ENCODE measurements at regions of chr20 and their contacts with region 1.

Region 1: DNA sequence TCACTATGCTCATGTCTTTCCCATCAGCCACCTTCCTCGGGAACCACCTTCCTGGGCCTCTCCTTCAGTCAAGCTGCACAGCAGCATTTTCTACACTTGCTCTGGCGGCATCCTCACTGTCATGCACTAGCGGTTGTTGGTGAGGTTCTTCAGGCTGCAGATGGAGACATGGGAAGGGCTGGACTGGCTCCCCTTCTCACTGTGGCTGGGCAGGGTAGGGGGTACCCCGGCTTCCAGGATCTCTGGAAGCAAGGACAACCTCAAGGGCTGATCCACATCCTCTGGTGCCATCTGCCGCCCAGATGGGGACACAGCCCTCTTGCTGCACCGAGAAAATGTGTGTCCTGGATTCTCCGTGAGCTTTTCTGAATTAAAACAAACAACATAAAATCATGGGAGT is 180.1 kb upstream of the RNF24 start:
- DNase-seq: peak; percentile 19 to 77
- H3K4me3 ChIP-seq: no peak overlapping the region
- H3K27ac ChIP-seq: no peak overlapping the region
- H3K4me1 ChIP-seq: no peaks in the 10 kb centered on the region; a peak in 1 of 7 replicates
- H3K27me3 ChIP-seq: no peaks in the 10 kb centered on the region
- CTCF ChIP-seq: peak; percentile 78 to 86 (median 79)
- EP300 ChIP-seq: no peak
- POLR2A ChIP-seq: no peak
- RAD21 ChIP-seq: peak; percentile 87 to 88

Region 2: GRCh38 chr20:4167261-4168021 is 28.1 kb before region 1 on chr20:
- CTCF ChIA-PET with region 1: interaction called, 13 read pairs
- POLR2A ChIA-PET with region 1: no interaction called
- DNase-seq: peak in 1 of 2 experiments; percentile 60
- H3K4me3 ChIP-seq: peak overlapping the region in 2 of 4 experiments; percentile 5 to 11; a peak in 3 of 8 replicates
- H3K27ac ChIP-seq: no peak overlapping the region; the same call in 1 of the 2 replicates
- H3K4me1 ChIP-seq: peaks cover 5 to 36% (median 29%) of the 10 kb centered on the region in 4 experiments
- H3K27me3 ChIP-seq: peaks cover 0 to 3% (median 0%) of the 10 kb centered on the region in 4 experiments; a peak in 2 of 7 replicates
- CTCF ChIP-seq: no peak
- EP300 ChIP-seq: no peak
- POLR2A ChIP-seq: 0 out of 3 replicates have a peak, but pooled peaks of 1 of the 2 experiments have one; percentile 18
- RAD21 ChIP-seq: no peak

Region 3: DNA sequence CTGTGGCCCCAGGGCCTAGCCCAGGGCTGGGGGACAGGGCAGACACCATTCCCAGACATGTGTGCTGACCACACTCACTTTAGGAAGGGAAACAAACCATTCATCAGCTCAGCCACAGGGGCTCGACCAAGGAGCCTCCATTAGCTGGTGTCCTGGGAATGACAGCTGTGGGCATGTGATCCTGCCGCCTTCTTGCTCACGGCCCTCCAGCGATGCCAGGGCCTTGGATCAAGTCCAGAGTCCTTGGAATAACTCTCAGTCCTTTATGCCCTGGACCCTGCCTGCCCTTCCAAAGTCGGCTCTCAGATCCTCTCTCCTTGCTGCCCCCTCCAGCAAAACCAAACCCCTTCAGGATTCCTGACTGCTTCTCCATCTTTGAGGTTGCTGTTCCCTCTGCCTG is 15.1 kb before region 1 on chr20:
- CTCF ChIA-PET with region 1: interaction called, 13 read pairs
- POLR2A ChIA-PET with region 1: no interaction called
- DNase-seq: no peak
- H3K4me3 ChIP-seq: no peak overlapping the region
- H3K27ac ChIP-seq: no peak overlapping the region
- H3K4me1 ChIP-seq: no peaks in the 10 kb centered on the region
- H3K27me3 ChIP-seq: no peaks in the 10 kb centered on the region
- CTCF ChIP-seq: no peak
- EP300 ChIP-seq: no peak
- POLR2A ChIP-seq: no peak
- RAD21 ChIP-seq: no peak

Region 4: DNA sequence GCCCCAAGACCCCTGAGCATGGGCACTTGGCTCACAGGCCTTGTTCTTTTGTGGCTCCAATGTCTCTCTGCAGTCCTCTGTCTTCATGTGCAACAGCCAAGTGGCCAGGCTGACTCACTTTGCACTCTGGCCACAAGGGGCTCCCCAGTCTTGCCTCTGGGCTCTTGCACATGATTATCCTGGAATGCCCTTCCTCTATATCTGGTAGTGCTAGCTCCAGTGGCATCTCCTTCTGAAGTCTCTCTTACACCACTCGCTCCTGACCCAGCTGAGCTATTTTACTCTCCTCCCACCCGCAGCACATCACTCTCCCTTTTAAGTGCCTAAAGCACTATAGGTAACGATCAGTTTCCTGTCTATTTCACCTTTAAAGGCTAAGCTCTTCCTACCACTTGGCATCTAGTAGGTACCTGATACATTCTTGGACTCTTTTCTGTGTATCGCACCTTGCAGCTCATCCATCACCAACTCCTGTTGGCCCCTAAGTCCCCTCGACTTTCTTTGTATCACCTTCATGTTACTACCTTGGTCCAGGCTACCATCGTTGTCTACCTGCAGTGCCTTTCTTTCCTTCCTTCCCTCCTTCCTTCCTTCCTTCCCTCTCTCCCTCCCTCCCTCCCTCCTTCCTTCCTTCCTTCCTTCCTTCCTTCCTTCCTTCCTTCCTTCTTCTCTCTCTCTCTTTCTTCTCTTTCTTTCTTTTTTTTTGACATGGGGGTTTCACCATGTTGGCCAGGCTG is 31.8 kb after region 1 on chr20:
- CTCF ChIA-PET with region 1: no interaction called
- POLR2A ChIA-PET with region 1: no interaction called
- DNase-seq: peak in 1 of 2 experiments; percentile 59
- H3K4me3 ChIP-seq: no peak overlapping the region
- H3K27ac ChIP-seq: no peak overlapping the region
- H3K4me1 ChIP-seq: peaks cover 0 to 5% (median 0%) of the 10 kb centered on the region in 4 experiments; a peak in 2 of 7 replicates
- H3K27me3 ChIP-seq: peaks cover 0 to 6% (median 3%) of the 10 kb centered on the region in 4 experiments; a peak in 5 of 7 replicates
- CTCF ChIP-seq: peak; percentile 73 to 92 (median 79)
- EP300 ChIP-seq: no peak
- POLR2A ChIP-seq: no peak
- RAD21 ChIP-seq: peak; percentile 74 to 83

Region 5: GRCh38 chr20:4344670-4345069 is 149.2 kb after region 1 on chr20:
- CTCF ChIA-PET with region 1: no interaction called
- POLR2A ChIA-PET with region 1: no interaction called
- DNase-seq: no peak
- H3K4me3 ChIP-seq: no peak overlapping the region
- H3K27ac ChIP-seq: no peak overlapping the region
- H3K4me1 ChIP-seq: no peaks in the 10 kb centered on the region
- H3K27me3 ChIP-seq: no peaks in the 10 kb centered on the region
- CTCF ChIP-seq: no peak
- EP300 ChIP-seq: no peak
- POLR2A ChIP-seq: no peak
- RAD21 ChIP-seq: no peak

Measured in H1 (cell line).